Endothelial cell of umbilical vein (primary cell): ENCODE measurements at regions of chr11 and their contacts with region 1.

Region 1: GRCh38 chr11:86360775-86361395 is 13.8 kb upstream of the CCDC81 start:
- DNase-seq: peak; percentile 61
- H3K4me3 ChIP-seq: no peak overlapping the region
- H3K27ac ChIP-seq: peak overlapping the region; percentile 34
- H3K4me1 ChIP-seq: peaks cover 7% of the 10 kb centered on the region
- H3K27me3 ChIP-seq: no peaks in the 10 kb centered on the region
- CTCF ChIP-seq: peak; percentile 19 to 33
- POLR2A ChIP-seq: no peak

Region 2: DNA sequence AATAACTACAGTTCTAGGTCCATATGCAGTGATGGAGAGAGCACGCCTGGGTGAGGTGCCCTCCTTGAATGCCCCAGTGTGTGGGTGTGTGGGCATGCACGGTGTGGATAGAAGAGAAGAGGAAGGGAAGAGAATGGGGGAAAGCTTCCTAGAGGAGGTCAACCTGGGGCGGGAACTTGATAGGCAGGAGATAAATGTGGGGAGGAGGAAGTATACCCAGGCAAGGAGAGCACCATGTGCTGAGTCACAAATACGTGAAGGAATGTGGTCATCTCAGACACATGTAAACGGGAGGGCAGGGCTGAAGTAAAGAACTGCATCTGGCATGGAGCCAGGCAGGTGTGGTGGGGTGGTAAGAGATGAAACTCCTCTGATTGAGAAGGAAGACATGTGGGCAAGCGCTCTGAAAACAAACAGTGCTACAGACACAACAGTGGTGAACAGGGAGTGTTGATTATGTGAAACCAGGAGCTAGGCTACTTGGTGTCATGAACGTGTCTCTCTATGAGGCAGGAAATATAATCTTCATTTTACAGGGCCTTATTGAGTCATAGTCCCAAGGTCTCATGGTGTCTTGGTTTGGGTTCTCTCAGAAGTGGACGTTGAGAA is 177.8 kb before region 1 on chr11:
- CTCF ChIA-PET with region 1: no interaction called
- POLR2A ChIA-PET with region 1: no interaction called
- dilution Hi-C with region 1: no loop called
- intact Hi-C with region 1: no loop called
- DNase-seq: no peak
- H3K4me3 ChIP-seq: no peak overlapping the region
- H3K27ac ChIP-seq: no peak overlapping the region
- H3K4me1 ChIP-seq: no peaks in the 10 kb centered on the region
- H3K27me3 ChIP-seq: no peaks in the 10 kb centered on the region
- CTCF ChIP-seq: no peak
- POLR2A ChIP-seq: no peak

Region 3: DNA sequence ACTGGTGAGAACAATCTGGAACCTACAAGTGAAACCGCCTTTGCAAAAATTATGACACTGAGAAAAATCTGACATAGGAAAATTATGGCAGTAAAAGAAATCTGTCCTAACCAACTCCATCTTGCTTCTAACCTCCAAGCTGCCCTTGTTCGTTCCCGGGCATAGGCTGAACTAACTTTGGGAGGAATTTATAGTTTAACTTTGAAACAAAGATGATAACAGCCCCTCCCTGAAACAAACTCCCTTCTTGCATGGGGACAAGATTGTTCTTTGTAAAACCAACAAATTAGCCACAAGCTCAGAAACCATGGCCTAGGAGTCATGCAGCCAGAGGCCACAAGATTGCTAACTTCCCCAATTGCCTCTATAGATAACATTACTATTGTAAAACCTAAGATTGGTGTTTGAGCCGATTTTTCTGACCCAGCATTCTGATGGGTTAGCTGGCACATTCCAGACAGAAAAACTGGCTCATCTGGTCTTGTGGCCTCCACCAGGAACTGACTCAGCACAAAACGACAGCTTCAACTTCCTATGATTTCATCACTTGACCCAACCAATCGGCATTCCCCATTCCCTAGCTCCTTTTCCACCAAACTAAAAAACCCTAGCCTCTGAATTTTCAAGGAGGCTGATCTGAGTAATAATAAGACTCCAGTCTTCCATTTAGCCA is 10.2 kb after region 1 on chr11:
- CTCF ChIA-PET with region 1: interaction called, 30 read pairs
- POLR2A ChIA-PET with region 1: no interaction called
- dilution Hi-C with region 1: no loop called
- intact Hi-C with region 1: no loop called
- DNase-seq: peak; percentile 67
- H3K4me3 ChIP-seq: no peak overlapping the region
- H3K27ac ChIP-seq: peak overlapping the region; percentile 18
- H3K4me1 ChIP-seq: peaks cover 20% of the 10 kb centered on the region
- H3K27me3 ChIP-seq: no peaks in the 10 kb centered on the region
- CTCF ChIP-seq: no peak
- POLR2A ChIP-seq: no peak

Region 4: DNA sequence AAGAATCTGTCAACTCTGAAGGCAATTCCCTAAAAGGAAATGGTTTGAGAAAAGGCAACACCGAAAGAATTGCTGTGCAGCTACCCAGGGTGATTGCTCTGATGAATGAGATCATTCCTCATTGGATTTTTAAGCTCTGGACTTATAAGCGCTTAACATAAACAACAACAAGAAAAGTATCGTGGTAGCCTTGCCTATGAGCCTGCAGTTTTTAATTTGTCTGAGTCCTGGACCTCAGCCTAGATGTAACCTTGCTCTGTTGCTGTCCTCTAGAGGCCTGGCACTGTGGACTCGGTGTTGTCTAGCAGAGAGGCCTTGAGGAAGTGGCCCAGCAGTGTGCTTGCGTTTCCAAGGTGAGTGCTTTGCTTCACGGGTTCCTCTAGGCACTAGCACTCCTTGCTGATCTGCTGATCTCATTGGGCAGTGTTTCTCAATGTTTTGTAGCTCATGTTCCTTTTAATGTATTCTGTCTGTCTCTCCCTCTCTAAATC is 34.2 kb after region 1 on chr11:
- CTCF ChIA-PET with region 1: interaction called, 13 read pairs
- POLR2A ChIA-PET with region 1: no interaction called
- dilution Hi-C with region 1: no loop called
- intact Hi-C with region 1: no loop called
- DNase-seq: peak; percentile 13
- H3K4me3 ChIP-seq: no peak overlapping the region
- H3K27ac ChIP-seq: no peak overlapping the region
- H3K4me1 ChIP-seq: peaks cover 34% of the 10 kb centered on the region
- H3K27me3 ChIP-seq: no peaks in the 10 kb centered on the region
- CTCF ChIP-seq: no peak
- POLR2A ChIP-seq: no peak

Region 5: GRCh38 chr11:86418917-86419316 is 58.0 kb after region 1 on chr11:
- CTCF ChIA-PET with region 1: interaction called, 97 read pairs
- POLR2A ChIA-PET with region 1: no interaction called
- dilution Hi-C with region 1: no loop called
- intact Hi-C with region 1: loop called (anchors 1 kb)
- DNase-seq: peak; percentile 11
- H3K4me3 ChIP-seq: no peak overlapping the region
- H3K27ac ChIP-seq: no peak overlapping the region
- H3K4me1 ChIP-seq: no peaks in the 10 kb centered on the region
- H3K27me3 ChIP-seq: no peaks in the 10 kb centered on the region
- CTCF ChIP-seq: peak in 1 of 2 donors; percentile 4
- POLR2A ChIP-seq: no peak

Region 6: GRCh38 chr11:86447763-86448480 is 87.0 kb after region 1 on chr11:
- CTCF ChIA-PET with region 1: interaction called, 55 read pairs
- POLR2A ChIA-PET with region 1: no interaction called
- dilution Hi-C with region 1: no loop called
- intact Hi-C with region 1: no loop called
- DNase-seq: no peak
- H3K4me3 ChIP-seq: no peak overlapping the region
- H3K27ac ChIP-seq: no peak overlapping the region
- H3K4me1 ChIP-seq: no peaks in the 10 kb centered on the region
- H3K27me3 ChIP-seq: no peaks in the 10 kb centered on the region
- CTCF ChIP-seq: no peak
- POLR2A ChIP-seq: no peak